Aorta (tissue), 5 donors: ENCODE measurements at regions of chr20 and their contacts with region 1.

Region 1: DNA sequence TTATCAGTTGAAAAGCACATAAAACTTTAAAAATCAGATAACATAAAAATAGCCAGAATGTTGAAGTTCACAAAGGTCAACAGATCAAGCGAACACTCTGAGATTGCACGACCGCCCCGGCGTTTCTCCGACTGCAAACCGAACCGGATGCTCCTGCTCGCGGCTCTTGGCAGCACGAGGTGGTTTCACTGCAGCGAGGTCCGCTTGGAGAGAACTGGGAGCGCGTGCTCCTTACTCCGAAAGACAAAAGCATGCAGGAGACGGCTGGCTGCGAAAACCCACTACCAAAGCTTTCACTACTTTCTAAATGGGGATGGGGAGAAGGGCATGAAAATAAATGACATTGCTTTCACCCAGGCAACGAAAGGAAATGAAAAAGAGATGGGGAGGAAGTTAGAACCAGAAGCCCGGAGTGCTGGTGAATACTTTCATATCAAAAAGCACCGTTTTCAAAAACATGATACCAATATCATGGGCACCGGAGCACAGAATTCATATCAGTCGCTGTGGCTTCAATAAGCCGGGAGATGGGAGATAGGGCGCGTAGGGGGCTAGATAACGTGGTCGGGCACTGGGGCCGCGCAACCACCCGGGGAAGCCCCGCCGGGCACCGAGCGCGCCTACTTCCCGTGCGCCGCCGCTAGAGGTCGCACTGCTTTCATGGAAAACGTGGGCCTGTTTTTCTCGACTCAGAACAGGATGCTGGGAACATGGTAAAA is 8.3 kb upstream of the ANKRD60 start:
- DNase-seq: peak; percentile 82 to 93
- ATAC-seq: peak; percentile 94
- H3K4me3 ChIP-seq: peak overlapping the region; percentile 64 to 68
- H3K27ac ChIP-seq: no peak overlapping the region
- H3K4me1 ChIP-seq: no peaks in the 10 kb centered on the region
- H3K27me3 ChIP-seq: no peaks in the 10 kb centered on the region

Region 2: GRCh38 chr20:58692594-58693226 is 455.9 kb after region 1 on chr20 and contains the start of gene NPEPL1:
- intact Hi-C with region 1: loop called in 1 of 2 experiments (anchors 10 kb)
- DNase-seq: peak; percentile 81 to 90
- ATAC-seq: peak; percentile 83
- H3K4me3 ChIP-seq: peak within 1 kb of the TSS; percentile 32 to 35
- H3K27ac ChIP-seq: peak within 1 kb of the TSS; percentile 30 to 32
- H3K4me1 ChIP-seq: no peaks in the 10 kb centered on the region
- H3K27me3 ChIP-seq: no peaks in the 10 kb centered on the region
- total RNA-seq, gene NPEPL1: 22.1 to 53.1 TPM

Region 3: DNA sequence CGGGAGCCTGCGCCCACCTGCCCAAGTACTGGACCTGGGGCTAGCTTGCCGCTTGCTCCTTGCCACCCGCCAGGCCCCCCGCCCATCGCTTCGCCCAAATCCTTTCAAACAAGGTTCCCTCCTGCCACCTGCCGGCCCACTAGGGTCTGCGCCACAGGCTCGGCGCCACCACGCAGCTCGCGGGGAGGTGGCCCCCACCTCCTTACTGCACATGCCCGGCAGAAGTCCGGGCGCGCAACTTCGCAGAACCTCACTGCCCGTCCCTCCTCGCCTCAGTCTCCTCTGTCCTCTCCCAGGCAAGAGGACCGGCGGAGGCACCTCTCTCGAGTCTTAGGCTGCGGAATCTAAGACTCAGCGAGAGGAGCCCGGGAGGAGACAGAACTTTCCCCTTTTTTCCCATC is 602.7 kb after region 1 on chr20:
- intact Hi-C with region 1: loop called (anchors 5 kb)
- DNase-seq: peak in 1 of 2 donors; percentile 78
- ATAC-seq: peak; percentile 36
- H3K4me3 ChIP-seq: no peak overlapping the region
- H3K27ac ChIP-seq: no peak overlapping the region
- H3K4me1 ChIP-seq: no peaks in the 10 kb centered on the region
- H3K27me3 ChIP-seq: no peaks in the 10 kb centered on the region

Region 4: DNA sequence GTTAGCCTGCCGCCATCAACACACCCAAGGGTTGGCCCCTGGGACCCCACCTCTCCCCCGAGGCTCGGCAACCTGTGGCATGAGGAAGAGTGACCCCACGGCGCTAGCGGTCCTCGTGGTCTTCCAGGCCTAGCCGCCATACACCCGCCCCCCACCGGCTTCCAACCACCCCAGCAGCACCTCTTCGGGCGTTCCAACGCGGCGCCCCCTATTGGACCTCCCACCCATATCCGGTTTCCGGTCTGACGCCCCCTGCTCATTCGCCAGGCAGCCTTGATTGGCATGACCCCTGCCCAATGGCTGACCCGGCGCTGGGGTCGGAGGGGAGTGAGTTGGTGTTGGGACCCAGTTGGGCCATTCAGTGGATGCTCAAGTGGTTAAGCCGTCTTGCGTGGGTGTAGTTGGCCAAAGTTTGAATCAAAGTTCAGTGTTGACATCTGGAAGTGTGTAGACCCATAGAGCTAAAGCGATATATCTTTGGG is 614.0 kb after region 1 on chr20 and contains the start of gene GNAS-AS1:
- intact Hi-C with region 1: loop called in 1 of 2 experiments (anchors 5 kb)
- DNase-seq: peak; percentile 84 to 90
- ATAC-seq: peak; percentile 48
- H3K4me3 ChIP-seq: peak within 1 kb of the TSS in 1 of 2 donors; percentile 16
- H3K27ac ChIP-seq: no peak within 1 kb of the TSS
- H3K4me1 ChIP-seq: no peaks in the 10 kb centered on the region
- H3K27me3 ChIP-seq: no peaks in the 10 kb centered on the region
- total RNA-seq, gene GNAS-AS1: 1.2 to 1.7 TPM